Tibial artery (tissue), 4 donors: ENCODE measurements at regions of chr1 and their contacts with region 1.

Region 1: DNA sequence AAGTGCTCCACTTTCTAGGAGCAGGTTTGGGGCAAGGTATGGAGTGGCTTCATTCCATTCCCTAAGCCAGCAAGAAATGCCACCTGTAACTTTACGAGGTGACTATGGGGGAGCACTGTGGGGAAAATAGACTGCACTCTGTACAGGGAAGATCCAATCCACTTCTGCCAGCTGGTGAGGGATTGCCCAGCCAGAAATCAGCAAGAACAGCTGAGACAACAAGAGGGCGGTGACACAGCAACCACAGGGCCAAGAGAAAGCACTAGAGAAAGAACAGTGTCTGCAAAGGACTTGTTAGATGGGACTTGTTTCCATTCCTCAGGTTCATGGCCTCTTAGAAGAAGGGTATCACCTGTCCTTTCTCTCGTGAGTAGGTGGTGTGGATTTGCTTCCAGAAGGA is 19.6 kb downstream of the CAPN8 start:
- DNase-seq: no peak
- H3K4me3 ChIP-seq: no peak overlapping the region
- H3K27ac ChIP-seq: no peak overlapping the region
- H3K4me1 ChIP-seq: no peaks in the 10 kb centered on the region
- H3K27me3 ChIP-seq: peaks cover 0 to 5% of the 10 kb centered on the region in 2 donors
- CTCF ChIP-seq: no peak

Region 2: GRCh38 chr1:224989615-224990014 is 1343.7 kb after region 1 on chr1:
- intact Hi-C with region 1: loop called (anchors 5 kb)
- DNase-seq: no peak
- H3K4me3 ChIP-seq: no peak overlapping the region
- H3K27ac ChIP-seq: no peak overlapping the region
- H3K4me1 ChIP-seq: no peaks in the 10 kb centered on the region
- H3K27me3 ChIP-seq: no peaks in the 10 kb centered on the region
- CTCF ChIP-seq: no peak